Head of caudate nucleus (tissue), 42 donors: ENCODE measurements at regions of chr1 and their contacts with region 1.

Region 1: GRCh38 chr1:160284782-160285344 is at the start of gene PEX19:
- DNase-seq: peak; percentile 94 to 99 (median 97)

Region 2: DNA sequence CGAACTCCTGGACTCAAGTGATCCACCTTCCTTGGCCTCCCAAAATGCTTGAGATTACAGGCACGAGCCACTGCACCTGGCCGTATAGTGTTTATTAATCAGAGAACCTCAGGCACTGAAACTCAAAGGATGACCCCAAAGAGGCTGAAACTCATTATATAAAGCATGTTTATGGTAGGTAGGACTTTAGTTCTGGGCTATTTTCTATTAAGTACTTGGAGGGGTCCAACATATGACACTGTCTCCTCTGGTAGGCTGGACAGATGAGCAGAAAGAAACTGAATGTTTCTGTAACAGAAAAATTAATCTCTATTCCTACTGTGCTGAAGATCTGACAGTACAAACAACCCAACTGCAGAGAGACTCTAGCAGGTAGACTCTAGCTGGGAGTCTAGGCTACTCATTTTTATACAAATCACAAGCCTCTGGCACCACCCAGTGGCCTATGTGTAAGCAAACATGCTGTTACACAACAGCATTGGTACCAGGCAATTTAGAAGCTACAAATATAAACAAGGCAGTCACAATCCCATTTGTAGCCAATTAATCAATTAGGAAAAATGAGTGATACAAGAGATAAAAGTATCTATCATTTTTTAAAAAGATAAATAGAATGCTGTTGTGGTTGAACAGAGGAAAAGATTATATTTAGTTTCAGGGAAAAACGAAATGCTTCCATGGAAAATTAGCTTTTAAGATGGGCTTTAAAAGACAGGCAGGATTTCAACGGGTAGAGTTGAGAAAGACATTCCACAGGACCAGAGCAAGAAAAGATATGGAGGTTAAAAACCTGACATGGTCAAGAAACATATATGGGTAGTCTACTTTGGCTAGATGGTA is 33.0 kb before region 1 on chr1:
- intact Hi-C with region 1: no loop called
- DNase-seq: peak; percentile 56 to 94 (median 84)

Region 3: DNA sequence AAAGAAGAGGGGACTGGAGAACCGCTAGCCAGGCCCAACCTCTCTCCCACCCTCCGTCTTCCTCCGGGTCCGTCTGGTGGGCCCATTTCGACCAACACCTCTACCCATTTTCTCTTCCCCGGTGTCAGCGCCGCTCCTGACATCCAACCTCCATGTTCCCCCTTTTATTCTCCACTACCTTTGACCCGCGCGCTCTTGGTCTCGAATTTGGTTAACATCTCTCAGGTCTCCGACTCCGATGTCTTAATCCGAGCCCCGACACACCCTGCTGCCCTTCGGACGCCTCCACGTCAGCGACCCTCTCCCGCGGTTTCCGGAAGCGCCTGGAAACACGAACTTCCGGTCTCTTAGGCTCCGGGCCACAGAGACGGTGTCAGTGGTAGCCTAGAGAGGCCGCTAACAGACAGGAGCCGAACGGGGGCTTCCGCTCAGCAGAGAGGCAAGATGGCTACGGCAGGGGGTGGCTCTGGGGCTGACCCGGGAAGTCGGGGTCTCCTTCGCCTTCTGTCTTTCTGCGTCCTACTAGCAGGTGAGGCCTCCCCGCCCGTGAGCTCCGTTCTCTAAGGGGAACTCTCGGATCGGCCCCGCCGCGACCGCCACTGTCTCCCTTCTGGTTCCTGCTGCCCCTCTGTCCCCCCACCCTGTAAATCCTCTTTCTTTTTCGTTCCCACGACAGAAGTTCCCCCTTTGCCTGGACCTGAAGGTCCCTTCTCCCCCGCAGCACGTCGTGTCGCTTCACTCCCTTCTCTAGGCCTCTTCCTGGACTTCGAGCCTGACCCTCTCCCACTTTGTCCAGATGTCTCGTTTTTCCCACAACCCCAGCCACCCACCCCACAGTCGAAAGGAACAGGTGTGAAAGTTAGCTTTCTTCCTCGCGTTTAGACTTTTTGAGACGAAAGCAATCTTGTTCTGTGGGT is 58.3 kb after region 1 on chr1 and contains the starts of genes COPA and NCSTN:
- intact Hi-C with region 1: loop called (anchors 5 kb)
- DNase-seq: peak; percentile 86 to 97 (median 92)